Activated naive CD4-positive, alpha-beta T cell treated with anti-CD3 and anti-CD28 coated beads for 36 hours (primary cell): ENCODE measurements at regions of chr5 and their contacts with region 1.

Region 1: DNA sequence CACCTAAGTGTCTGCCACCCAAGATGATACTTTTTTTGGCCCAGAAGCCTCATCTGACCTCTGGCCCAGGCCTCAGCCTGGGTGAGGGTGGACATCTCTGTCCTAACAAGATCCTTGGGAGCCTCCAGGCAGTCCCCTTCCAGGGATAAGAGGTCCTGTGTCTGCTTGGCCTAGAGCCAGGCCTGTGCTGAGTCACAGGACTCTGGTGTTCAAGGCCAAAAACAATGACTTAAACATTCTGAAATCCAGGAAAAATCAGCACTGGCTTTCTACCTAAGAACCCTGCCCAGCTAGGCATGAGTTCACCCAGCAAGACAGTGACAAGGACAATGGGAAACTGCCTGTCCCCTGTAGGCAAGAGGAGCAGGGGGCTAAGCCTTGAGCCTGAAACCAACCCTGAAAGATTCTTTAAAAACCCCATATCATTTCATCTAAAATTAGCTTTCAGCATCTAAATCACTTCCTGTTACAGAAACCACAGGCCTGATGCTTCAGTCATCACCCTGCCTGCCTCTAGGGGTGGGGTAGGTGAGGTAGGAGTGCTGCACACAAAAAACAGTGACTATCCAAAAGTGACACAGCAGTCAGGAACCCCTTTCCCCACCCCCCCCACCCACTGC is 29.9 kb downstream of the CSF2 start:
- DNase-seq: peak; percentile 84
- H3K4me3 Mint-ChIP-seq: no peak overlapping the region
- H3K27ac Mint-ChIP-seq: peak overlapping the region; percentile 73
- H3K4me1 Mint-ChIP-seq: peaks cover 60% of the 10 kb centered on the region
- H3K27me3 Mint-ChIP-seq: no peaks in the 10 kb centered on the region

Region 2: DNA sequence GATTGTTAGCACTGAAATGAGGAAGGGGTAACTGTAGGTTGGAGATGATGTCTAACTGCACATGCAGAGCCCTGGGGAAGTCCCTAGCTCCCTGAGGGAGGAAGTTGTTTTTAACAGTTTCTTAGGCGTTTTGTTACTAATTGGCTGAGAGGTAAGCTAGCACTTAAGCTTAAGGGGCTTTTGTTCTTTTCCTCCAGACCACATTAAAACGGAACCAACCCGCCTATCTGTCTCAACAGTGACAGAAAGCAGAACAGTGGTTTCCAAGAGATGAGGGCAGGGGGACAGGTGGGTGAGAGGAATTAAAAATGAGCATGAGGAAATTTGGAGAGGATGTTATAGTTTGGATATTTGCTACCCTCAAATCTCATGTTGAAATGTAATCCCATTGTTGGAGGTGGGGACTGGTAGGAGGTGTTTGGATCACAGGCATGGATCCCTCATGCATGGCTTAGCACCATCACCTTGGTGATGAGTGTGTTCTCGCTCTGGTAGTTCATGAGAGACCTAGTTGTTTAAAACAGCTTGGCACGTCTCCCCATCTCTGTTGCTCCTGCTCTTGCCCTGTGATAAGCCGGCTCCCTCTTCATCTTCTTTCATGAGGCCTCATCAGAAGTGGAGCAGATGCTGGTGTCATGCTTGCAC is 893.8 kb before region 1 on chr5:
- CTCF ChIA-PET with region 1: no interaction called
- intact Hi-C with region 1: loop called (anchors 1 kb)
- DNase-seq: peak; percentile 77
- H3K4me3 Mint-ChIP-seq: peak overlapping the region; percentile 69
- H3K27ac Mint-ChIP-seq: peak overlapping the region; percentile 96
- H3K4me1 Mint-ChIP-seq: peaks cover 57% of the 10 kb centered on the region
- H3K27me3 Mint-ChIP-seq: no peaks in the 10 kb centered on the region

Region 3: GRCh38 chr5:131747180-131748105 is 356.0 kb before region 1 on chr5:
- CTCF ChIA-PET with region 1: no interaction called
- intact Hi-C with region 1: loop called (anchors 1 kb)
- DNase-seq: no peak
- H3K4me3 Mint-ChIP-seq: peak overlapping the region; percentile 49
- H3K27ac Mint-ChIP-seq: peak overlapping the region; percentile 85
- H3K4me1 Mint-ChIP-seq: peaks cover 37% of the 10 kb centered on the region
- H3K27me3 Mint-ChIP-seq: no peaks in the 10 kb centered on the region

Region 4: DNA sequence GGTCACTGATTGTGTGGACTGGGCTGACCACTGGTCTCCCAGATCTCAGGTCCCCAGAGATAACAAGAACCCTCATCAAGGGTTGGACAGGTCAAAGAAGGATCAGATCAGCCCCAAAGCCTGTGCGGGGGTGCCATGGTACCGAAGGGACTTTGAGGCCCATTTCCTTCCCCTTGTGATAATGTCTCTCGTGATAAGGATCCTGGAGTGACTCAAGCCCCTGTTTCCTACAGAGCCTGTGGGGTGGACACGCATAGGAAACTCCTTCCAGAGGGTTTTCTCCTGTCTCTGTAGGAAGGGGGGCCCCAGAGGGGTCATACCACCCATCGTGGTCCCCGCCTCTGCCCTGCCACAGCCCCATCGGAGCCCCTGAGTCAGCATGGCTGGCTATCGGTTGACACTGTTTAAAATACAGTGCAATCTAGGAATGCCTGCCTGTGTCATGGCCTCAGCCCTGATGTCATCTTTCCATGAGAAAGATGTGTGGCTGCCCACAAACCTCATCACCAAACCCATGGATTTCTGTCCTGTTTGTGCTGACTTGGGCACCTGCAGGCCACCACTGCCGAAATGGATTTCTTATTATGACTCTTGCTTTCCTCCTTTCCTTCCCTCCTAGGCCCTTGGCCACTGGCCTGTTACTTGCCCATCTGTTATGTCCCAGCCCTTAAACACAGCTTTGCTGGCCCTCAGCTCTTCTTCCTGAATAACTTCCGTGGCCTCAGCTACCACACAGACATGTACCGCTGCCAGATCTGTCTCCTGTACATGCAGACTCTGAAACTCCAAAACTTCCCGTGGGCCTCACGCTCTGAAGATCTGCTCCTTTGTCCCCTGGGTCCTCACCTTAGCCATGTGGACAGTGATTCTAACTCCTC is 32.7 kb before region 1 on chr5:
- CTCF ChIA-PET with region 1: interaction called, 7 read pairs
- intact Hi-C with region 1: loop called (anchors 1 kb)
- DNase-seq: no peak
- H3K4me3 Mint-ChIP-seq: no peak overlapping the region
- H3K27ac Mint-ChIP-seq: no peak overlapping the region
- H3K4me1 Mint-ChIP-seq: peaks cover 3% of the 10 kb centered on the region
- H3K27me3 Mint-ChIP-seq: no peaks in the 10 kb centered on the region

Region 5: DNA sequence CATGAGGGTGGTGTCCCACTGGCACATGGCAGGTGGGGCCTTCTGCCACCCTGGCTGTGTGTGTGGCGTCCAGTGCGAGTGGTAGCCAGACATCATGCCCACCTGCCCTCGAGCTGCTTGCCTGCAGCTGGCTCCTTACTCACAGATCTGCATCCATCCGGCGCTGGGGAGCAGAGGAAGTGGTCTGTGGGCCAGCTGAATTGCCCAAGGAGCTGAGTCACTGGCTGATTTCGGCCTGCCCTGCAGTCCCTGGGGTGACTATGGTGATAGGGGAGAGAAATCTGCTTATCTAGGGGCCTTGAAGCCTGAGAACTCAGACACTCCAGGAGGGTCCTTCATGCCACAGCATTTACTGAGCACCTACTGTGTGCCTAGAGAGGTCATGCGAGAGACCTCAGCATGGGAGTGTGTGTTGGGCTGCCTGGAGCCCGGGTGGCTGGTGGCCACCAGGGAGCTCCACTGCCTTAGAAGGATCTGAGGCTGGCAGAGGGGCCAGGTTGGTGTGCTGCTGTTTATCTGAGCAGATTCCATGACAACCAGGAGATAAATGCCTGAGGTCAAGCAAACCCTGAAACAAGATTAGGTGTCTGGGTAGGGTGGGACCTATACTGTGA is 323.2 kb after region 1 on chr5:
- CTCF ChIA-PET with region 1: no interaction called
- intact Hi-C with region 1: loop called (anchors 1 kb)
- DNase-seq: peak; percentile 83
- H3K4me3 Mint-ChIP-seq: peak overlapping the region; percentile 46
- H3K27ac Mint-ChIP-seq: peak overlapping the region; percentile 95
- H3K4me1 Mint-ChIP-seq: peaks cover 94% of the 10 kb centered on the region
- H3K27me3 Mint-ChIP-seq: no peaks in the 10 kb centered on the region

Region 6: DNA sequence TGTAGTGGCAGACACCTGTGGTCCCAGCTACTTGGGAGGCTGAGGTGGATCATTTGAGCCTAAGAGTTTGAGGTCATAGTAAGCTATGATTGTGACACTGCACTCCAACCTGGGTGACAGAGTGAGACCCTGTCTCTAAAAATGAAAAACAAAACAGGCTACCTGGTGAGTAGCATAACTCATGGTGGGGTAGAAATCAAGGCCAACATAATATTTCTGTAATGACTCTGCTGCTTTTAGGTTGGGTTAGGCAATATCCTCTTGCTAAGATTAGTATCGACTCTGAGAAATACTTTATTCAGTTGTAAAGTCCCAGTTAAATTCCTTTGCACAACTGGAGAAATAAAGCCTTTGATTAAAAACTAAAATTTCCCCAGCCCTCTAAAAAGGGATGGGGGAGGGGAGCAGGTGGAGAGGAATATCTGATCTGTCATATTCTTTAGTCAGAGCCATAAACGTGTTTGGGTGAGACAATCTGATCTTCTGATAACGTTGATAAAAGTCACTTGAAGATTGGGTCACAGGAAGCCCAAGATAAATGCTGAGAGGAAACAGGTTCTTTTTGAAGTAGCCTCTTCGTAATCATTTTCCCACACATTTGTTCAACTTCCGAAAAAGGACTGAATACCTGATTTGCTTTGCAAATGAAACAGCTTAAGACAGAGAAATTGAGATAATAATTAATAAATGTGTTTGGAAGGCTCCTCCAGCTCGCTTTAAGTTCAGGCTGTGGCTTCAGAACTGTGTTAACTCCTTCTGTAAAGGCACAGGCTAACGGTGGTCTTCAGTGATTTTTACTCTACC is 585.3 kb after region 1 on chr5:
- CTCF ChIA-PET with region 1: no interaction called
- intact Hi-C with region 1: loop called (anchors 1 kb)
- DNase-seq: peak; percentile 69
- H3K4me3 Mint-ChIP-seq: no peak overlapping the region
- H3K27ac Mint-ChIP-seq: peak overlapping the region; percentile 17
- H3K4me1 Mint-ChIP-seq: peaks cover 27% of the 10 kb centered on the region
- H3K27me3 Mint-ChIP-seq: no peaks in the 10 kb centered on the region